ENCODE measurements at regions of chr10 and their contacts with region 1.

Region 1: GRCh38 chr10:73886085-73886529 is 11.8 kb upstream of the CAMK2G start:
- DNase-seq: peak in 6 of 10 donors; percentile 55 to 76 (median 68)
- H3K4me3 ChIP-seq: no peak overlapping the region
- H3K27ac ChIP-seq: peak overlapping the region in 36 of 59 donors; percentile 9 to 89 (median 71)
- H3K27me3 ChIP-seq: no peaks in the 10 kb centered on the region
- CTCF ChIP-seq: peak; percentile 59 to 92 (median 86)

Region 2: DNA sequence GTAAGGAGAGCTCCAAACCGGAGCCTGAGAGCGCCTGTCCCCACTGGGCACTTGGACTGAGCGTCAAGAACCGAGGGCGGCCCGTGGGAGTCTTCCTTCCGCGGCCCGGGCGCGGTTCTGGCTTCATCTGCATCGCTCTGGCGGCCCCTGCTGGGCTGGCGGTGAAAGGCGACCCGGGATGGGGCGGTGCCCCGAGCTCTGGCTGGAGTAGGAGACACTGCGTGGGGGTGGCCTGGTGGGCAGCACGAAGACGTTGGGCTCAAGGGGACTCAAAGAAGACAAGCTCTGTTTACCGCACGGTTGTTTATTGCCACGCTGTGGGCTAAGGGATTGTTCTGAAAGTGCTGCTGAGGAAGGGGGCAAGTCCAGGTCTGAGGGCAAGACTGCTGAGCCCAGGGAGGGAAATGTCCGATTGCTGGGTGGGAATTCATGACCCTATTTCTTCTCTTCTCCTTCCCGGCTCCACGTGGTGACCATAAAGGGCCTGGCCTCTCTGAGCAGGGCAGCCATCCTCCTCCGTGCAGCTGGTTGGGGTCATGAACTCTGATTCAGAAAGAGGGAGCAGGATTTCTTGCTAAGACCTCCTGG is 54.6 kb after region 1 on chr10:
- intact Hi-C with region 1: loop called in 1 of 2 experiments (anchors 1 kb)
- DNase-seq: peak; percentile 34 to 76 (median 54)
- H3K4me3 ChIP-seq: peak overlapping the region in 22 of 59 donors; percentile 3 to 44 (median 26)
- H3K27ac ChIP-seq: peak overlapping the region in 23 of 59 donors; percentile 2 to 71 (median 51)
- H3K27me3 ChIP-seq: peaks cover 0 to 3% (median 0%) of the 10 kb centered on the region in 45 donors
- CTCF ChIP-seq: peak; percentile 15 to 90 (median 73)

Region 3: GRCh38 chr10:74081192-74081803 is 195.2 kb after region 1 on chr10:
- intact Hi-C with region 1: loop called (anchors 5 to 10 kb)
- DNase-seq: peak in 6 of 10 donors; percentile 17 to 54 (median 46)
- H3K4me3 ChIP-seq: no peak overlapping the region
- H3K27ac ChIP-seq: peak overlapping the region in 12 of 59 donors; percentile 1 to 65 (median 20)
- H3K27me3 ChIP-seq: no peaks in the 10 kb centered on the region
- CTCF ChIP-seq: peak; percentile 37 to 83 (median 72)

Region 4: GRCh38 chr10:74238031-74238431 is 351.9 kb after region 1 on chr10:
- intact Hi-C with region 1: loop called in 1 of 2 experiments (anchors 5 kb)
- DNase-seq: no peak
- H3K4me3 ChIP-seq: peak overlapping the region in 5 of 59 donors; percentile 0 to 15 (median 13)
- H3K27ac ChIP-seq: no peak overlapping the region
- H3K27me3 ChIP-seq: no peaks in the 10 kb centered on the region
- CTCF ChIP-seq: no peak

Measured in dorsolateral prefrontal cortex (tissue), 120 donors.